ENCODE measurements at regions of chr12 and their contacts with region 1.

Region 1: DNA sequence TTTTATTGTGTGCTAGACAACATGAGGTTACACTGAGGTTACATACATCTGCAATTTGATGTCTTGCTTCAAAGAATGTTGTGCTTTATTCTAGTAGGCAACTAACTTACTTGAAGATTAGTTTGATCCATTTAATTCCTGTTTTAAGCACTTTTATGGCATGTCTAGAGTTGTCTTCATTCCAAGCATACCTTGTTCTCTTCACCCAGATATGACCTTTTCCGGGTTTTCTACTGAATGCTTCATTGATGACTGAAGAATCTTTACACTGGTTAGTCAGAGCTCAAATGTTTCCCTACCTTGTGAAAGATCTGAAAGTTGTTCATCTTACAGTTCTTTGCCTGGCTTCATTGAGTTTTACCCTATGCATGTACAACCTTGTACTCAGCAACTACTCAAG is 274.0 kb upstream of the KITLG start:
- DNase-seq: peak; percentile 22
- H3K4me3 Mint-ChIP-seq: peak overlapping the region; percentile 8
- H3K27ac Mint-ChIP-seq: peak overlapping the region; percentile 79
- H3K4me1 Mint-ChIP-seq: peaks cover 32% of the 10 kb centered on the region
- H3K27me3 Mint-ChIP-seq: no peaks in the 10 kb centered on the region
- CTCF ChIP-seq: no peak

Region 2: GRCh38 chr12:88638966-88639760 is 215.1 kb before region 1 on chr12:
- CTCF ChIA-PET with region 1: no interaction called
- intact Hi-C with region 1: loop called (anchors 10 kb)
- DNase-seq: no peak
- H3K4me3 Mint-ChIP-seq: no peak overlapping the region
- H3K27ac Mint-ChIP-seq: no peak overlapping the region
- H3K4me1 Mint-ChIP-seq: peaks cover 6% of the 10 kb centered on the region
- H3K27me3 Mint-ChIP-seq: no peaks in the 10 kb centered on the region
- CTCF ChIP-seq: no peak

Region 3: GRCh38 chr12:88925454-88925853 is 71.2 kb after region 1 on chr12:
- CTCF ChIA-PET with region 1: no interaction called
- intact Hi-C with region 1: loop called (anchors 1 kb)
- DNase-seq: no peak
- H3K4me3 Mint-ChIP-seq: peak overlapping the region; percentile 18
- H3K27ac Mint-ChIP-seq: peak overlapping the region; percentile 83
- H3K4me1 Mint-ChIP-seq: peaks cover 63% of the 10 kb centered on the region
- H3K27me3 Mint-ChIP-seq: no peaks in the 10 kb centered on the region
- CTCF ChIP-seq: no peak

Region 4: GRCh38 chr12:89328246-89329030 is 474.2 kb after region 1 on chr12:
- CTCF ChIA-PET with region 1: no interaction called
- intact Hi-C with region 1: no loop called
- DNase-seq: peak; percentile 58
- H3K4me3 Mint-ChIP-seq: no peak overlapping the region
- H3K27ac Mint-ChIP-seq: no peak overlapping the region
- H3K4me1 Mint-ChIP-seq: peaks cover 26% of the 10 kb centered on the region
- H3K27me3 Mint-ChIP-seq: no peaks in the 10 kb centered on the region
- CTCF ChIP-seq: no peak